ENCODE measurements at regions of chr10 and their contacts with region 1.

Region 1: DNA sequence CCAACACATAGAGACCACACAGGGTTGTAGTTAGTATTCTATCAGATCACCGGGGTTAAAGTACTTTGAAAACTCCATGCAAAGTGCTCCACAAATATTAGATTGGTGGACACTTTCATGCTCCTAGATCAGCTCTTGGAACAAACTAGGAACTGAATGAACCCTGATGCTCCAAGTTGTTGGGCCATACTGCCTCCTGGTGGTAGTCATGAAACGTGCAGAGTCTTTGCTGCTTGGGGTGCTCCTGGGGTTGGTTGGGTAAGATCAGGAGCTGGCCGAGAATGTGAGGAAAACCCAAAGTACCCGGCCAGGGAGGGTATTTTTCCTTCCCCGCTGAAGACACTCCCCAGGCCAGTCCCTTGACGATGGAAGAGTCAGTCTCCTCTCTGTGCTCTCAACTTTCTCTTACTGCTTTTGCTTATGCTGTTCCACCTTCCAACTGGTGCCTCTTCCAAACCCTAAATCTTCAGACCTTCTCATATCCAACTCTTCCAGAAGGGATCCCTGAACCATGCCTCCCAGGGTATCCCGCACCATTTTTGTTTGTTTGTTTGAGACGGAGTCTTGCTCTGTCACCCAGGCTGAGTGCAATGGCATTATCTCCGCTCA is 920 bp upstream of the RPEL1 start:
- DNase-seq: peak; percentile 71
- ATAC-seq: peak; percentile 91

Region 2: DNA sequence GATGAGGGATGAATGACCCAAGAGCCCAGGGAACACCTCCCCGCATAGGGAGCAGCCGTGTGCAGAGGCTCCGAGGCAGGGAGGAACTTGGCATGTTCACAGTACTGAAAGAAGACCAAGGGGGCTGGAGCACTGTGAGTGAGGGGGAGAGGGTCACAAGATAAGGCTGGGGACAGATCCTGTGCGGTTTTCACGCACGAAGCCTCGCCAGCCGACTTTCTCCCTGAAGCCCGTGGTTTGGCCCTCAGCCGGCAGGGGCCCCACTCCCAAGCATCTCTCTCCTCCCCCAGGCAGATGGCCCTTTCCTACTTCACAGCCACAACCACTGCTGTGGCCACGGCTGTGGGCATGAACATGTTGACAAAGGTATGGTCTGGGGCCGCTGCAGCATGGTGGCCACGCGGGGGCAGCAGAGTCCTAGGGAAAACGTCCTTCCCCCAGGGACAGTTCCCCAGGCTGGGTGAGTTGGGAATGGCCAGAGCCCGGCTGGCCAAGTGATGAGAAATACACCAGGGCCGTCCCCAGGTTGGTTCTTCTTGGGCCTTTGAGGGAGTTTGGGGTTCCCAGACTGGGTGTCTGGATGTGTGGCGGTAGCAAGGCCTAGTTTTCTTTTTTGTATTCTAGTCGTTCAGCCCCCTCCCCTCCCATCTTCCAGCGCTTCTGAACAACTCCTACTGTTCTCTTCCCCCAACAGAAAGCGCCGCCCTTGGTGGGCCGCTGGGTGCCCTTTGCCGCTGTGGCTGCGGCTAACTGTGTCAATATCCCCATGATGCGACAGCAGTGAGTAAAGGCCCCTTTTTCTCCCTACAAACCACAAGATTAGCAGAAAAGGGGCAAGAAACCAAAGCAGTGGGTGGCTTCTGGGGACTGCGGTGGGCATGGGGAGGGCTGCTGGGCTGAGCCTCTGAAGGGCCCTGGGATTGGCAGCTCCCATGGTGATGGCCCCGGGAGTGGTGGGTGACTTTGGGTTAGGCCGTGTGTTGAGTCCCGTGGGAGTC is 515.4 kb before region 1 on chr10:
- intact Hi-C with region 1: loop called (anchors 10 kb)
- DNase-seq: peak; percentile 94
- ATAC-seq: peak; percentile 92

Region 3: DNA sequence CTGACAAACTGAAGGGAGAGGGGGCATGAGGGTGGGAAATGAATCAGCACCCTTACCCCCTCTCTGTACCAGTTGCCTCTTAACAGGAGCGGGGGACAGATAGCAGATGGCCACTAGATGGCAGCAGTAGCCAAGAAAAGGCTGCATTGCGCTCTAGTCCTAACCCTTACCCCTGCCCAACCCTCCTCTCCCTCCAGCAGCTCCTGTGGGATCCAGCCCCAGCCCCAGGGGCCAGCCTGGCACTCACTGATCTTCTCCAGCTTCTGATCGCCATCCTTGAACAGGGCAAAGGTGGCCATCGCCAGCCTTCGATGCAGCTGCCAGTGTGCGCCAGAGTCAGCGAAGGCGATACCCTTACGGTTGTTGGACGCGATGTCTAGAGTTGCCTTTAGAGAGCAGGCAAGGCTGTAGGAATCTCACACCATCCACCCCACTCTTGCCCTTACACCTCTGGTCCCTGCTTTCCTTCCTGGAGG is 409.7 kb before region 1 on chr10:
- intact Hi-C with region 1: loop called (anchors 5 kb)
- DNase-seq: peak; percentile 73
- ATAC-seq: peak; percentile 95

Region 4: DNA sequence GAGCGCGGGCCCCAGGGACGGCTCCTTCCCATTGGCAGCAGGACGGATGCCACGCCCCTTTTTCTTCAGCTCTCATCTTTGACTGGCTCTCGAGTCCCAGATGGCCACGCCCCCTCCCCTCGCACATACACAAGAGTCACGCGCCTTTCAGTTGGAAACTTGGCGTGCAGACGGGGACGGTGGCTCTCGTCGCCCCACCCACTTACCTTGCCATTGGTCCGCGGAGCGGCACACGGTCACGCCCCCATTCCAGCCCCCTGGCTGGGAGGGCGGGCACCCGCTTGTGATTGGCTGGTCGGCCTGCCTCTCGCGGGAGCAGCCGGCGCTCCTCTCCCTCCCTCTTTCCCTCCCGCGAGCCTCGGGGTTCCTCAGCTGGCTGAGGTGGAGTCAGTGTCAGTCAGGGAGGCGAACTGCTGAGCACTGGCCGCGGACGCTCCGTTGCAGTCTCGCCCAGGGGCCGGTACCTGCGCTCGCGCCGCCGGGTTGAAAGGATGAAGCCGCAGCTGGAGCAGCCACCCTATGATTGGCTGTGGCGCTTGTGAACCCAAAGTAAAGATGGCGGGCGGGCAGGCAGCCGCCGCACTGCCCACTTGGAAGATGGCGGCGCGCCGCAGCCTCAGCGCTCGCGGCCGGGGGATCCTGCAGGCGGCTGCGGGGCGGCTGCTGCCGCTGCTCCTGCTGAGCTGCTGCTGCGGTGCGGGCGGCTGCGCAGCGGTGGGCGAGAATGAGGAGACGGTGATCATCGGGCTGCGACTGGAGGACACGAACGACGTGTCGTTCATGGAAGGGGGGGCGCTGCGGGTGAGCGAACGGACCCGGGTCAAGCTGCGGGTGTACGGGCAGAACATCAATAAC is 326.6 kb before region 1 on chr10 and contains the start of gene CNNM2:
- intact Hi-C with region 1: loop called (anchors 1 kb)
- DNase-seq: peak; percentile 100
- ATAC-seq: peak; percentile 98
- total RNA-seq, gene CNNM2: 3.0 TPM

Region 5: GRCh38 chr10:103080891-103081581 is 163.7 kb before region 1 on chr10:
- intact Hi-C with region 1: loop called (anchors 5 kb)
- DNase-seq: no peak
- ATAC-seq: no peak

Region 6: DNA sequence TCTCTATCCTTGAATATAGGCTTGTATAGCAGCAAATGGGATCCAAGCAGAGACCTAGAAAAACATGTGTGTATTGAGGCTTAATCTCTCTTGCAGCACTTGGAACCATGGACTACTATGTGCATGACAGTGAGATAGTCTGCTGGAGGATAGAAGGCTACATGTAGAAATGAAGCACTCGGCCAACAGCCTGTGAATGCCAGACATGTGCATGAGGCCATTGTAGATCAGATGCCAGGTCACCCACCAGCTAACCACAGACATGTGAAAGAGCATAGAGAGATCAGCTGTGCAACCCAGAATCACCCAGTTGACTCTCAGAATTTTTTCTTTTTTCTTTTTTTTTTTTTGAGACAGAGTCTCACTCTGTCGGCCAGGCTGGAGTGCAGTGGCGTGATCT is 142.6 kb before region 1 on chr10:
- intact Hi-C with region 1: loop called (anchors 5 kb)
- DNase-seq: no peak
- ATAC-seq: no peak

Region 7: DNA sequence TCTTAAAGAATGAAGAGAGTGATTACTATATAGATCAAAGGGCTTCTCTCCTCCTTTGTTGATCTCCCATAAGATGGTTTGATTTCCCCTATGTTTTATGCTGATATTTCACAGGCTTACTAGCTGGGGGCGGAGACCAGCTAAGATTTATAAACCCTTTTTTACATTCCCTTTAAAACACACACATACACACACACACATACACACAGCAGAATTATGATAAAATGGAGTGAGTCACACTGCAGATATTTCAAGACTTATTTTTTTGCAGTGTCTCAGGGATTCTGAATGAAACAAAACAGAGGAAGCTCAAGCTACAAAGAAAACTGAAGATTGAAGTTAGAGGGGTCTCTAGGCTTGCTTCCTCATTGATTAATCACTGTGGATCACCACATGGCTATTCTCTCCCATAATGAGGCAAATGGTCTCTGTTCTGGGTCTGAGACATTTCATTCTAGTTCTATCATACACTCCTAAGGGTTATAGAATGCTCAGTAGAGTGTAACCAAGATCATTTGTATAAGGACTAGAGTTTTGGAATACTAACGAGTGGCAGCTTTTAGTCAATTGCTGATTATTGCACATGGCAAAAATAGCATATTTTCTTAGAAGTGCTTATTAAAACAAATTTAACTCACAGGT is 50.7 kb after region 1 on chr10:
- intact Hi-C with region 1: no loop called
- DNase-seq: no peak
- ATAC-seq: no peak

Measured in Right ventricle myocardium inferior (tissue), 1 donor.